CD4-positive, alpha-beta memory T cell (primary cell): ENCODE measurements at regions of chr4 and their contacts with region 1.

Region 1: DNA sequence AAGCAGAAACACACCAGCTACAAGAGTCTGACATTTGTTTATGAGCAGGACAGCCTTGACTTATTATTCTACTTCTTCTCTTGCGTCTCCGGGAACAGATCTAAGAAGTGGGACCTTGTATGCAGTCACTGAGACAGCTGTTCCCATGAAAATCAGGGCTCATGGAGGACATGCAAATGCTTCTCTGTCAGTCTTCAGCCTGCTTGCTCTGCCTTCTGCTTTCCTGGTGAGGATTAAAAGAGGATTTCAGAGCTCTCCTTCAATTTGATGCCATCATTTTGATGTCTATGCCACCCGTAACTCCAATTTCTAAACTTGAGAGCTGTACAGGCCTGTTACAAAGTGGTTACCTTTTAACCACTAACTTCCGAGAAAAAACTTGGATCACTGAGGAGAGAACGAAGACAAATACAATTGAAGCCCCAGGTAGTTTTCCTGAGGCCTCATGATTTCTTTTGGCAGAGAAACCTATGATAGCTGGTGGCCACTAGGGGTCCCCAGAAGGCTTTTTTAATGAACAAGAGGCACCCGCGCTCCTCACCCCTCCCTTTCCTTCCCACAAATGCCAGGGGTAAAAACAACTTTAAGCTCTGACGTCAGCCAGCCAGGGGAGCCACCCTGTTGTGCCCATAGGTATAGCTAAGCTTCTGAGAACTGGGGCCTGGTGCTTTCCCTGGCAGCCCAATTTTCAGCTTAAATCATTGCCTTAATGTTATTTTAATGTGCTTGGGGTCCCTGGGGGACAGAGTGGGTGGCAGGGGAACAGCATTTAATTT is 97.0 kb downstream of the DDIT4L start:
- DNase-seq: peak; percentile 87 to 97 (median 91)
- H3K4me3 ChIP-seq: no peak overlapping the region
- H3K4me3 Mint-ChIP-seq: peak overlapping the region in 4 of 8 donors; percentile 12 to 61 (median 36)
- H3K27ac ChIP-seq: no peak overlapping the region
- H3K27ac Mint-ChIP-seq: peak overlapping the region; percentile 78 to 96 (median 96)
- H3K4me1 ChIP-seq: peaks cover 13% of the 10 kb centered on the region
- H3K4me1 Mint-ChIP-seq: peaks cover 9 to 28% (median 15%) of the 10 kb centered on the region in 4 donors
- H3K27me3 ChIP-seq: no peaks in the 10 kb centered on the region
- H3K27me3 Mint-ChIP-seq: no peaks in the 10 kb centered on the region

Region 2: GRCh38 chr4:99808260-99808857 is 284.9 kb before region 1 on chr4:
- CTCF ChIA-PET with region 1: interaction called, 10 read pairs
- POLR2A ChIA-PET with region 1: no interaction called
- intact Hi-C with region 1: loop called (anchors 10 kb)
- DNase-seq: peak; percentile 69 to 76 (median 70)
- H3K4me3 ChIP-seq: no peak overlapping the region
- H3K4me3 Mint-ChIP-seq: peak overlapping the region in 1 of 8 donors; percentile 62
- H3K27ac ChIP-seq: no peak overlapping the region
- H3K27ac Mint-ChIP-seq: no peak overlapping the region
- H3K4me1 ChIP-seq: no peaks in the 10 kb centered on the region
- H3K4me1 Mint-ChIP-seq: peaks cover 5 to 6% (median 5%) of the 10 kb centered on the region in 4 donors
- H3K27me3 ChIP-seq: no peaks in the 10 kb centered on the region
- H3K27me3 Mint-ChIP-seq: peaks cover 4 to 5% of the 10 kb centered on the region in 2 donors

Region 3: DNA sequence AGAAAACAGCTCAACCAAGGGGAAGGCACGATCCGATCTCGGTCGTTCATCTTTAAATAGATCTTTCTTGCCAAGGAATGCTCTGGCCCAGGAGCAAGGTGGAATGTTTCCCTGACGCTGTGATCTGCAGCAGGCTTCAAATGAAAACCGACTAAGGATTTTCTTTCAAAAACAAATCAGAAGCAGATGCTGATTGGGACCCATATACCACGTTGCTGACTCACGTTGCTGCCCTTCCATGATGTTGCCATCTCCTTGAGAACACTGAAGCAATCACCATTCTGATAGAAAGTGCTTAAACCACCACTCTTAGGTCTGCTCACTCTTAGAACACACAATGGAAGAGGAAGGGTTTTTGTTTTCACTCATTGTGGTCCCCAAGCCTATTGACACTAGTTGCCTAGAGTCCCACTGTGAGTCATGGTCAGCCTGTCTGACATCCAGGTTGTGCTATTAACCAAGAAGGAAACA is 225.1 kb before region 1 on chr4:
- CTCF ChIA-PET with region 1: no interaction called
- POLR2A ChIA-PET with region 1: no interaction called
- intact Hi-C with region 1: no loop called
- DNase-seq: no peak
- H3K4me3 ChIP-seq: no peak overlapping the region
- H3K4me3 Mint-ChIP-seq: no peak overlapping the region
- H3K27ac ChIP-seq: no peak overlapping the region
- H3K27ac Mint-ChIP-seq: peak overlapping the region in 1 of 7 donors; percentile 19
- H3K4me1 ChIP-seq: no peaks in the 10 kb centered on the region
- H3K4me1 Mint-ChIP-seq: peaks cover 0 to 3% (median 0%) of the 10 kb centered on the region in 4 donors
- H3K27me3 ChIP-seq: no peaks in the 10 kb centered on the region
- H3K27me3 Mint-ChIP-seq: no peaks in the 10 kb centered on the region

Region 4: GRCh38 chr4:99894161-99894997 is 198.9 kb before region 1 on chr4 and contains the start of gene LAMTOR3:
- CTCF ChIA-PET with region 1: interaction called, 3 read pairs
- POLR2A ChIA-PET with region 1: interaction called, 4 read pairs
- intact Hi-C with region 1: loop called (anchors 10 kb)
- DNase-seq: peak; percentile 88 to 94 (median 92)
- H3K4me3 ChIP-seq: peak within 1 kb of the TSS; percentile 76 to 97
- H3K4me3 Mint-ChIP-seq: peak within 1 kb of the TSS; percentile 97 to 100 (median 98)
- H3K27ac ChIP-seq: peak within 1 kb of the TSS; percentile 87
- H3K27ac Mint-ChIP-seq: peak within 1 kb of the TSS; percentile 97 to 99 (median 99)
- H3K4me1 ChIP-seq: peaks cover 34% of the 10 kb centered on the region
- H3K4me1 Mint-ChIP-seq: peaks cover 27 to 47% (median 38%) of the 10 kb centered on the region in 4 donors
- H3K27me3 ChIP-seq: no peaks in the 10 kb centered on the region
- H3K27me3 Mint-ChIP-seq: no peaks in the 10 kb centered on the region
- total RNA-seq, gene LAMTOR3: 24.2 to 27.0 TPM

Region 5: GRCh38 chr4:100023800-100024199 is 69.5 kb before region 1 on chr4:
- CTCF ChIA-PET with region 1: no interaction called
- POLR2A ChIA-PET with region 1: no interaction called
- intact Hi-C with region 1: no loop called
- DNase-seq: no peak
- H3K4me3 ChIP-seq: no peak overlapping the region
- H3K4me3 Mint-ChIP-seq: no peak overlapping the region
- H3K27ac ChIP-seq: no peak overlapping the region
- H3K27ac Mint-ChIP-seq: no peak overlapping the region
- H3K4me1 ChIP-seq: no peaks in the 10 kb centered on the region
- H3K4me1 Mint-ChIP-seq: no peaks in the 10 kb centered on the region
- H3K27me3 ChIP-seq: no peaks in the 10 kb centered on the region
- H3K27me3 Mint-ChIP-seq: peaks cover 13 to 22% of the 10 kb centered on the region in 2 donors

Region 6: GRCh38 chr4:100082852-100083251 is 10.4 kb before region 1 on chr4:
- CTCF ChIA-PET with region 1: interaction called, 28 read pairs
- POLR2A ChIA-PET with region 1: no interaction called
- intact Hi-C with region 1: no loop called
- DNase-seq: no peak
- H3K4me3 ChIP-seq: no peak overlapping the region
- H3K4me3 Mint-ChIP-seq: no peak overlapping the region
- H3K27ac ChIP-seq: no peak overlapping the region
- H3K27ac Mint-ChIP-seq: no peak overlapping the region
- H3K4me1 ChIP-seq: no peaks in the 10 kb centered on the region
- H3K4me1 Mint-ChIP-seq: peaks cover 0 to 7% (median 3%) of the 10 kb centered on the region in 4 donors
- H3K27me3 ChIP-seq: no peaks in the 10 kb centered on the region
- H3K27me3 Mint-ChIP-seq: peaks cover 3 to 5% of the 10 kb centered on the region in 2 donors

Region 7: DNA sequence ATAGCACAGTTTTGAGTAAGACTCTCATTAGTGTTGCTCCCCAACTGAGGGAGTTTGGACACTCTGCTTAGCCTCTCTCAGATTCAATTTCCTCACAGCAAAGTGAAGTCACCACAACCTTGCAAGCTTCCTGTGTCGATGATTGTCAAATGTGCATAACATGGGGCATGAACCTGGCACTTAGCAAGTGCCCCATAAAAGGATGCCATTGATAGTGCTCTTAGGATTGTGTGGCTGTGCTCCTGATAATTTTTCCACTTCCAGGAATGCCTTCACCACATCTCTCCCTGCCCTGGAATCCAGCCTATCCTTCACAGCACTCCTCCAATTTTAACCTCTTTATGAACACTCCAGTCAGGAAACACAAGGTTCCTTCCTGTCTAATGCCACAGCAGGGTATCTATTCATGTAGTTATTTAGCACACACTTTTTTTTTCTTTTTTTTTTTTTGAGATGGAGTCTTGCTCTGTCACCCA is 944.7 kb after region 1 on chr4:
- CTCF ChIA-PET with region 1: no interaction called
- POLR2A ChIA-PET with region 1: no interaction called
- intact Hi-C with region 1: loop called (anchors 10 kb)
- DNase-seq: peak in 4 of 5 donors; percentile 9 to 39 (median 36)
- H3K4me3 ChIP-seq: no peak overlapping the region
- H3K4me3 Mint-ChIP-seq: peak overlapping the region in 7 of 8 donors; percentile 4 to 85 (median 72)
- H3K27ac ChIP-seq: no peak overlapping the region
- H3K27ac Mint-ChIP-seq: peak overlapping the region; percentile 67 to 90 (median 77)
- H3K4me1 ChIP-seq: peaks cover 47% of the 10 kb centered on the region
- H3K4me1 Mint-ChIP-seq: peaks cover 35 to 48% (median 41%) of the 10 kb centered on the region in 4 donors
- H3K27me3 ChIP-seq: no peaks in the 10 kb centered on the region
- H3K27me3 Mint-ChIP-seq: no peaks in the 10 kb centered on the region

Region 8: GRCh38 chr4:101730291-101731117 is 1637.2 kb after region 1 on chr4:
- CTCF ChIA-PET with region 1: interaction called, 66 read pairs
- POLR2A ChIA-PET with region 1: interaction called, 3 read pairs
- intact Hi-C with region 1: loop called (anchors 1 kb)
- DNase-seq: peak; percentile 23 to 38 (median 35)
- H3K4me3 ChIP-seq: no peak overlapping the region
- H3K4me3 Mint-ChIP-seq: no peak overlapping the region
- H3K27ac ChIP-seq: no peak overlapping the region
- H3K27ac Mint-ChIP-seq: peak overlapping the region in 1 of 7 donors; percentile 6
- H3K4me1 ChIP-seq: no peaks in the 10 kb centered on the region
- H3K4me1 Mint-ChIP-seq: peaks cover 0 to 1% (median 0%) of the 10 kb centered on the region in 4 donors
- H3K27me3 ChIP-seq: no peaks in the 10 kb centered on the region
- H3K27me3 Mint-ChIP-seq: peaks cover 0 to 5% of the 10 kb centered on the region in 2 donors